Activated T-helper 1 cell treated with anti-CD3 and anti-CD28 coated beads, Interleukin-12 subunit alpha, Interleukin-12 subunit beta, Interleukin-2, Interleukin-4 antibody, amounts not matched to agents 30 ng/mL and 10 ng/mL and 1 ng/mL, durations not matched to agents 14 hours and 24 hours and 36 hours (primary cell): ENCODE measurements at regions of chr2 and their contacts with region 1.

Region 1: GRCh38 chr2:191020221-191020741 is 6.3 kb upstream of the STAT1 start:
- DNase-seq: peak; percentile 96
- H3K4me3 Mint-ChIP-seq: no peak overlapping the region
- H3K27ac Mint-ChIP-seq: no peak overlapping the region
- H3K4me1 Mint-ChIP-seq: peaks cover 45% of the 10 kb centered on the region
- H3K27me3 Mint-ChIP-seq: peaks cover 2% of the 10 kb centered on the region

Region 2: GRCh38 chr2:189783927-189784867 is 1236.1 kb before region 1 on chr2 and contains the starts of genes ORMDL1 and PMS1:
- intact Hi-C with region 1: loop called (anchors 5 kb)
- DNase-seq: peak; percentile 94
- H3K4me3 Mint-ChIP-seq: peak within 1 kb of the TSS; percentile 92
- H3K27ac Mint-ChIP-seq: peak within 1 kb of the TSS; percentile 93
- H3K4me1 Mint-ChIP-seq: peaks cover 40% of the 10 kb centered on the region
- H3K27me3 Mint-ChIP-seq: no peaks in the 10 kb centered on the region
- total RNA-seq, gene ORMDL1: 78.7 and 80.1 TPM in 2 replicates
- total RNA-seq, gene PMS1: 54.4 and 55.9 TPM in 2 replicates

Region 3: GRCh38 chr2:190679813-190680591 is 340.3 kb before region 1 on chr2:
- intact Hi-C with region 1: loop called (anchors 5 kb)
- DNase-seq: peak; percentile 27
- H3K4me3 Mint-ChIP-seq: peak overlapping the region; percentile 69
- H3K27ac Mint-ChIP-seq: peak overlapping the region; percentile 87
- H3K4me1 Mint-ChIP-seq: peaks cover 53% of the 10 kb centered on the region
- H3K27me3 Mint-ChIP-seq: no peaks in the 10 kb centered on the region

Region 4: GRCh38 chr2:190693533-190694232 is 326.6 kb before region 1 on chr2:
- intact Hi-C with region 1: no loop called
- DNase-seq: no peak
- H3K4me3 Mint-ChIP-seq: no peak overlapping the region
- H3K27ac Mint-ChIP-seq: no peak overlapping the region
- H3K4me1 Mint-ChIP-seq: peaks cover 30% of the 10 kb centered on the region
- H3K27me3 Mint-ChIP-seq: no peaks in the 10 kb centered on the region

Region 5: DNA sequence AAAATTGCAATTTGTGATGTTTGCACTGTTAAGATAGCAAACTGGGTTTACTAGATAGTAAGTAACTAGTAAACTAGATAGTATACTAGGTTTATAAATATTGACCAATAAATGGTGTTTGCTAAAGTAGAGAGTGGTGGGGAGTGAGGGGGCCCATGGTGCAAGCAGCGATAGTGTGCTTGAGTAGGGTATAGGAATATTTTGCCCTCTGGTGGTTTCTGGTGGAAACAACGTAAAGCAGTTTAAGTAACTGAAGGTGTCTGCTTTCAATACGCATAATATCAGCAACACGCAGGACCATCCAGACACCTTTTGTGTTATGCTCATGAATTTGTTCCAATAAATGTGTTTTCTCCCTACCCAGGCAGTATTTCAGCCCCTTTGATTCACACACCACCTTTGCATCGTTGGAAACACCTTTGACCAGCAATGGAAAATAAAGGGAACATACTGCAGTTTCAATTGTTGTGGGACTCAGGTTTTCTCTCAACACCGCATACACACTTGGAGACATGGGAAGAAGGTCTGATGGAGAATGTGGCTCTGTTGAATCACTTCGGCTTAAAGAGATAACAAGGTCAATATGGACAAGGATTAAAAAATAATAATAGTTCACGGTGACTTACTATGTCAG is 10.4 kb after region 1 on chr2:
- intact Hi-C with region 1: loop called (anchors 1 kb)
- DNase-seq: peak; percentile 31
- H3K4me3 Mint-ChIP-seq: no peak overlapping the region
- H3K27ac Mint-ChIP-seq: peak overlapping the region; percentile 42
- H3K4me1 Mint-ChIP-seq: peaks cover 70% of the 10 kb centered on the region
- H3K27me3 Mint-ChIP-seq: no peaks in the 10 kb centered on the region

Region 6: GRCh38 chr2:191051825-191052778 is 31.8 kb after region 1 on chr2:
- intact Hi-C with region 1: loop called (anchors 2 kb)
- DNase-seq: no peak
- H3K4me3 Mint-ChIP-seq: no peak overlapping the region
- H3K27ac Mint-ChIP-seq: no peak overlapping the region
- H3K4me1 Mint-ChIP-seq: peaks cover 25% of the 10 kb centered on the region
- H3K27me3 Mint-ChIP-seq: no peaks in the 10 kb centered on the region

Region 7: GRCh38 chr2:191150600-191151330 is 130.5 kb after region 1 on chr2 and contains the start of gene STAT4:
- intact Hi-C with region 1: loop called (anchors 1 kb)
- DNase-seq: peak; percentile 78
- H3K4me3 Mint-ChIP-seq: peak within 1 kb of the TSS; percentile 95
- H3K27ac Mint-ChIP-seq: peak within 1 kb of the TSS; percentile 95
- H3K4me1 Mint-ChIP-seq: peaks cover 85% of the 10 kb centered on the region
- H3K27me3 Mint-ChIP-seq: no peaks in the 10 kb centered on the region
- total RNA-seq, gene STAT4: 57.4 and 62.1 TPM in 2 replicates